ENCODE measurements at regions of chr1 and their contacts with region 1.

Region 1: DNA sequence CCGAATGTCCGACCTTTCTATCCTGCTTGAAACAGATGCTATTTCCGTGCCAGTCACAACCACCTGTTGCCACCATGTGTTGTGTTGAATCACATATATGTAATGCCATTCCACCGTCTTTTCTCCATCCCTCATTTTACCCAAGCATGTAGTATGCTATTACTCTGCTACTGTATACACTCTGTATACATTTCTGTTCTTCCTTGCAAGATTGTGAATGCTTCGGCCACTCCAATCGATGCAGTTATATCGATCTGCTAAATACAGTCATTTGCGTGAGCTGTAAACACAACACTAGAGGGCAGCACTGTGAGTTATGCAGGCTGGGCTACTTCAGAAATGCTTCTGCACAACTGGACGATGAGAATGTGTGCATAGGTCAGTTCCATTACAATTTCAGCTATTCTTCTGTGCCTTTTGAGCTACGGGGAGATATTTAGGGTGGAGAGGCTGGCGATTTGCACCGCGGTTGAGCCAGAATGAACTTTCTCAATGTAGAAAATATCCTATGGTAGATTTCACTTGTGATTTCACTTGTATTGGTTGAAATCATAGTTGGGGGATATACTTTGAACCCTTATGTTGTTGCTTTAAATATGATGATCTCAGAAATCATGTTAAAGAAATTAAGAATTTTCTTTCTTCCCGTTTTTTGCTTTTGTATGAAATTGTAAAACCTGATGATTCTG is 289.8 kb downstream of the NTNG1 start:
- DNase-seq: peak in 1 of 2 donors; percentile 20
- H3K4me3 ChIP-seq: no peak overlapping the region
- H3K27ac ChIP-seq: no peak overlapping the region
- H3K4me1 ChIP-seq: no peaks in the 10 kb centered on the region
- H3K27me3 ChIP-seq: no peaks in the 10 kb centered on the region
- CTCF ChIP-seq: no peak

Region 2: GRCh38 chr1:106910798-106911197 is 519.9 kb before region 1 on chr1:
- intact Hi-C with region 1: loop called (anchors 5 kb)
- DNase-seq: no peak
- H3K4me3 ChIP-seq: no peak overlapping the region
- H3K27ac ChIP-seq: no peak overlapping the region
- H3K4me1 ChIP-seq: no peaks in the 10 kb centered on the region
- H3K27me3 ChIP-seq: no peaks in the 10 kb centered on the region
- CTCF ChIP-seq: no peak

Region 3: DNA sequence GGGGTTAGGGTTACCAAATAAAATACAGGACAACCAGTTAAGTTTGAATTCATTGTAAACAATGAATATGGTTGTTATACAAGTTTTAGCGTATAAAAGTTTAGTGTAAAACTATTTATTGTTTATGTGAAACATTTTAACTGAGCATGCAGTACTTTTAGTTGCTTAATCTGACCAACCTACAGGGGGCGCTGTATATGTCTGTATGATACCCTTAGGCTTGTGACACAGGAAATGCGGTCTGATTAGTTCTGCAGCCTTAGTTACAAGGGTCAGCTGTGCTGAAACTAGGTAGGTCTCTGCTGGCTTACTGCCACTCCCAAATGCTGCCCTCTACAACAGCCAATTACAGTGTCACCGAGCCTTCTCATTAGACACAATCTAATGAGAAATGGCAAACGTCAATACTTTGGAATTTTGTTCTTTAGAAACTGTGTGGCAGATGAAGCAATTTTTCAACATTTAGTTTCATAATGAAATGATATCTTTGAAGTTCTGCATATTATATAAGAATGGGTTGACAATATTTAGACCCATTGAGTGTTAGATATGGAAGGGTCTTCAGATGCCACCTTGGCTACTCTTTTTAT is 233.6 kb before region 1 on chr1:
- intact Hi-C with region 1: no loop called
- DNase-seq: no peak
- H3K4me3 ChIP-seq: no peak overlapping the region
- H3K27ac ChIP-seq: no peak overlapping the region
- H3K4me1 ChIP-seq: no peaks in the 10 kb centered on the region
- H3K27me3 ChIP-seq: no peaks in the 10 kb centered on the region
- CTCF ChIP-seq: no peak

Region 4: GRCh38 chr1:107262467-107263286 is 168.0 kb before region 1 on chr1:
- intact Hi-C with region 1: no loop called
- DNase-seq: no peak
- H3K4me3 ChIP-seq: no peak overlapping the region
- H3K27ac ChIP-seq: no peak overlapping the region
- H3K4me1 ChIP-seq: no peaks in the 10 kb centered on the region
- H3K27me3 ChIP-seq: no peaks in the 10 kb centered on the region
- CTCF ChIP-seq: no peak

Measured in tibial artery (tissue), 4 donors.